Gastrocnemius medialis (tissue), 4 donors: ENCODE measurements at regions of chr1 and their contacts with region 1.

Region 1: GRCh38 chr1:10765734-10766478 is 30.5 kb downstream of the CASZ1 start:
- DNase-seq: no peak
- ATAC-seq: peak in 1 of 2 donors; percentile 31
- H3K4me3 ChIP-seq: no peak overlapping the region
- H3K27ac ChIP-seq: peak overlapping the region; percentile 53 to 72 (median 64)
- H3K4me1 ChIP-seq: peaks cover 59 to 70% of the 10 kb centered on the region in 2 donors
- H3K27me3 ChIP-seq: no peaks in the 10 kb centered on the region
- CTCF ChIP-seq: no peak
- POLR2A ChIP-seq: no peak

Region 2: DNA sequence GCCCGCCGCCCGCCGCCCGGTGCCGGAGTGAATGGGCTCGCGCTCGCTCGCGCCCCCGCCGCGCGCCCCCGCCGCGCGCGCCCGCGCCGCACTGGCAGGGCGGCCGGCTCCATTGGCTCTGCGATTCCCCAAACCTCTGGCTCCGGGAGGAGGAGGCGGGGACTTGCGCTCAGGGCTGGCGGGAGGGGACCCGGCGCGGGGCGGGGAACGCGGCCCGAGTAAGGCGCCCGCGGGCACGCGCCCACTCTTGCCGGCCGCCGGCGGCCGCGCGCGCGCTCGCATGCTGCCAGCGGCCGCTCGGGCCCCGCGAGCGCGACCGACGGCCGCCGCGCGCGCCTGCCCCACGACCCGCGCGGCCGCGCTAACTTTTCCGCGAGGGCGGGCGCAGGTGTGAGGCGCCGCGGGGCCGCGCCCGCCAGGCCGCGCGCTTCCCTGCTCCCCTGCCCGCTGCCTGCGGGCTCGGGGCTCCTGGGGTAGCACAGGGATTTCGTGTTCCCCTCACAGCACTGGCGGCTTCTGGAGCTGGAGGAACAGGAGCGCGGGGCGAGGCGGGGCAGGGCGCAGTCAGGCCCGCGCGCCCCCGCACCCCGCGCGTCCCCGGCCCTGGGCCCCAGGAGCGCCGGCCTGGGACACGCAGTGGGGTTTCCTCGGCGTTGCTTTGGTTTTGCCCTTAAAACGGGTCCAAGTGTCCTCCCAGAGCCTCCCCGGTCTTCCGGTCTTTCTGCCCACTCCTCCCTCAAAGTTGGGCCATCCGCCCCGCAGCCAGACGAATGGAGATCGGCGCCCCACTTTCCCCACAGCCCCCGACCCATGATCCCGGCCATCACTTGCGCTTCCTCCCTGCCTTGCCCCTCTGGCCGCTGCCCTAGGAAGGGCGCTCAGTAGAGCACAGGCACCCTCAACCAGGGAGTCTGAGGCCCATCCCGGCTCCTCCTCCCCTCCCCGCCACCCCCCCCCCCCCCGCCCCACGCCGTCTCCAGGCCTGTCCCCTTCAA is 71.0 kb before region 1 on chr1:
- in situ Hi-C with region 1: no loop called
- intact Hi-C with region 1: loop called (anchors 2 kb)
- DNase-seq: peak; percentile 85 to 90
- ATAC-seq: peak; percentile 75 to 76
- H3K4me3 ChIP-seq: peak overlapping the region; percentile 43 to 72 (median 54)
- H3K27ac ChIP-seq: peak overlapping the region; percentile 82 to 90 (median 86)
- H3K4me1 ChIP-seq: peaks cover 45 to 62% of the 10 kb centered on the region in 2 donors
- H3K27me3 ChIP-seq: no peaks in the 10 kb centered on the region
- CTCF ChIP-seq: no peak
- POLR2A ChIP-seq: peak; percentile 11 to 36